ENCODE measurements at regions of chr5 and their contacts with region 1.

Region 1: DNA sequence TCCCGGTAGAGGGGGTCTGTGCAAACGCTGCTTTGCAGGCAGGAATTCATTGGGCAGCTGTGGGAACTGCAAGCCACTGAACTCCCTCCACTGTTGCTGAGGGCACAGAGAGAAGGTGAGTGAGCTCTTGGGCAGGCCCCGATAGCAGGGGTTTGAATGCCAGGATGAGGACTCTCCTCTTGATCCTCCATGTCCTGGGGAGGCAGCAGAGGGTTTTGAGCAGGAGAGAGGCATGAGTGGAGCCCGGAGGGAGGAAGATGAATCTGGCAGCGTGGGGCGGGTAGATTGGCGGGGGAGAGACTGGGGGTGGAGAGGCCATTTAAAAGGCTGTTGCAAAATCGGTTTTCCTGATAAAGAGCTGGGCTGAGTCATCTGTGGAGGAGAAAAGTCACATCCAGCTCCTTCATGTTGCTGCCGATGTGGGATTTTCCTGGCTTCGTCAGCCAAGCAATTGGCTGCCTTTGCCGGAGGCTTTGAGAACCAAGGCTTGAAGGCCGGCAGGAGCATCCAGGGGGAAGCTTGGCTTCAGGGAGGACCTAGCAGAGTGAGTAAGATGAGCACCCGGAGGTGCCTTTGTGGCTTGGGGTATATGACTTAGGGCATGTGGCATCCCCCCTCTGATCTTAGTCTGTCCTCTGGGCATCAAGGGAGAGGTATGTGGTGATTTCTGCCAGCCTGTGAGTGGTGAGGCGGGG is at the start of gene SYNPO:
- DNase-seq: peak; percentile 70 to 87
- H3K4me3 ChIP-seq: peak within 1 kb of the TSS; percentile 42; the same call in 1 of the 2 replicates
- H3K27ac ChIP-seq: peak within 1 kb of the TSS; percentile 62
- H3K4me1 ChIP-seq: peaks cover 91% of the 10 kb centered on the region
- H3K27me3 ChIP-seq: no peaks in the 10 kb centered on the region
- CTCF ChIP-seq: no peak
- total RNA-seq, gene SYNPO: 1.8 and 2.0 TPM in 2 replicates

Region 2: DNA sequence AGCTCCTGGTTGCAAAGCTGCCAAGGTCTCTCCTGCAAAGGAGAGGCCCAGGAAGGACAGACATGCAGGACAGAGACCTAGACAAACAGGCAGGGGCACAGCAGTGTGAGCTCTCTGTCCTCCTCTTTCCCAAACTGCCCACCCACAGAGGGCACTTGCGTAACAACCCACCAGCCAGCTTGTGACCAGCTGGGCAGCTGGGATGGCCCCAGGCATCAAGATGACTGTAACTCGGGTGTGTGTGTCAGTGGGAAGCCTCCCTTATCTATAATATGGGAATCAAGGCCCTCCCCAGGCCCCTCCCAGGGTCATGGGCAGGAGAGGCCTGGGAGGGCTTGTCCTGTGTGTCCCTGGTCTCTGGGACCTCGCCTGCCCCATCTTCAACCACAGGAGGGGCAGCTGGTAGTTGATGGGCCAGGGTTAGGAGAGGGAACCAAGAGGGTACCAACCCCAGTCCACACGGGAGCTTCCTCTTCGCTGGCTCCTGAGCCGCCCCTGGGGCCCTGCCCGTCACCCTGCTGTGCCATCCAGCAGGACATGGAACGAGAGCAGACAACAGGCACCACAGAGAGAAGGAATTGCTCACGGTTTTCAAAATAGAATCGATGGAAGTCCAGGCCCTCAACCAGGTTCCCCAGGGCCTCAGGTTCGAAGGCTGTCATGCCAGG is 412.7 kb before region 1 on chr5:
- CTCF ChIA-PET with region 1: no interaction called
- POLR2A ChIA-PET with region 1: no interaction called
- intact Hi-C with region 1: no loop called
- DNase-seq: peak in 1 of 2 experiments; percentile 18
- H3K4me3 ChIP-seq: no peak overlapping the region
- H3K27ac ChIP-seq: no peak overlapping the region
- H3K4me1 ChIP-seq: peaks cover 8% of the 10 kb centered on the region; the same call in 1 of the 2 replicates
- H3K27me3 ChIP-seq: no peaks in the 10 kb centered on the region
- CTCF ChIP-seq: no peak

Region 3: DNA sequence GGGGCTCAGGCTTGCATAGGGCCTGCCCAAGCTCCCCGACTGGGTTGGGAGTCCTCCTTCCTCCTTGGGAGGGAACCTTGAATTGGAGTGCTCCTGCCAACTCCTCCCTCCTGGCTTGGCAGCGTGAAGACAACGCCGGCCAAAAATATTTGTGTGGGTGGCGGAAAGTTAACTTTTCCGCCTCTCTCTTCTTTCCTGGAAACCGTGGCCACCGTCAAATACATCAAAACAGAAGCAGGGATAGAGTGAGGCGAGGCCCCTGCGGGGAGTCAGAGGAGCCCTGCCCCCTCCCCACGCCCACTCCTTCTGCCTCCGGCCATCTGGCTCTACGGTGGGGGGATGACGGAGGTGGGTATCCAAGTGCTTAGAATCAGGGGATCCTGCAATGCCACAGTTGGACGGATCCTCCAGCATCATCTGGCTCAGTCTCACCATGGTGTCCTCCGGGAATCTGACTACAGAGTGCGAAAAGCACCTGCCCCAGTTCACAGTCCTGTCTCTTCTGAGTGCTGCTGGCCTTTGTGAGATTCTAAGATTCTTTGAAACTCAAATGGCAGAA is 25.2 kb before region 1 on chr5:
- CTCF ChIA-PET with region 1: no interaction called
- POLR2A ChIA-PET with region 1: no interaction called
- intact Hi-C with region 1: loop called (anchors 2 kb)
- DNase-seq: peak in 1 of 2 experiments; percentile 19
- H3K4me3 ChIP-seq: no peak overlapping the region
- H3K27ac ChIP-seq: no peak overlapping the region
- H3K4me1 ChIP-seq: peaks cover 42% of the 10 kb centered on the region
- H3K27me3 ChIP-seq: peaks cover 19% of the 10 kb centered on the region
- CTCF ChIP-seq: no peak

Region 4: DNA sequence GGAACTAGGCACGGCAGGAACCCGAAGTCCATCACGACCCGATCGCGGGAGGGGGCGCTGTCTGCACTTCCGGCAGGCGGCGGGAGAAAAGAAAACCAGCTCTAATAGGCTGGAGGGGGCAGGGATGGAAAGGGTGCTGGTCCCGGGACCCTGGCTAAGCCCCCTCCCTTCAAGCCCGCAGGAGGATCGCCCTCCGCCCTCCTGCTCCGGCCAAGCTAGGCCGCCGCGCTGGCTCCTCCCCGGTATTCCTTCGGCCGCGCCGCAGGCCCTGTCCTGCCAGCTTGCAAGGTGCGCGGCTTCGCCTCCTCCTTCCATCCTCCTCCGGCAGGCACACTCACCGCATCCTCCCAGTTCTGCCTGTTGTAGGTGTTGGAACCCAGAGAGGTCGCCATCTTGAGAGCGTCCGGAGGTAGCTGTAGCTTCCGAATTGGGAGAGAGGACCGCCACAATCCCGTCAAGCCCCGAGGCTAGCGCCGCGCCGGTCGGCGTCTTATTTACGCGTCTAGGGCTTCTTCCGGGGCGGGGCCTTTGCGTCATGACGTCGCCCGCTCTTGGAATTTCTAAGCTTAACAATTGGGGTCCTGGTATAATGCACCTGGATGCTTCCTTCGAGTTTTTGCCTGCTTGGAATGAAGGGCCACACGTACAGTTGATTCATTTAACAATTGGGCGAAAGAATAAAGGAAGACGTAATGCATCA is 60.3 kb after region 1 on chr5 and contains the start of gene RBM22:
- CTCF ChIA-PET with region 1: interaction called, 13 read pairs
- POLR2A ChIA-PET with region 1: no interaction called
- intact Hi-C with region 1: no loop called
- DNase-seq: peak; percentile 74 to 89
- H3K4me3 ChIP-seq: peak within 1 kb of the TSS; percentile 86
- H3K27ac ChIP-seq: peak within 1 kb of the TSS; percentile 59
- H3K4me1 ChIP-seq: peaks cover 20% of the 10 kb centered on the region; the same call in 1 of the 2 replicates
- H3K27me3 ChIP-seq: no peaks in the 10 kb centered on the region
- CTCF ChIP-seq: peak; percentile 65
- total RNA-seq, gene RBM22: 49.7 and 57.3 TPM in 2 replicates

Region 5: GRCh38 chr5:151080623-151081430 is 440.4 kb after region 1 on chr5 and contains the start of gene TNIP1:
- CTCF ChIA-PET with region 1: no interaction called
- POLR2A ChIA-PET with region 1: no interaction called
- intact Hi-C with region 1: loop called (anchors 10 kb)
- DNase-seq: peak; percentile 78 to 98
- H3K4me3 ChIP-seq: peak within 1 kb of the TSS; percentile 75
- H3K27ac ChIP-seq: peak within 1 kb of the TSS; percentile 81
- H3K4me1 ChIP-seq: peaks cover 80% of the 10 kb centered on the region
- H3K27me3 ChIP-seq: no peaks in the 10 kb centered on the region
- CTCF ChIP-seq: no peak
- total RNA-seq, gene TNIP1: 122 and 124 TPM in 2 replicates